ENCODE measurements at regions of chrX and their contacts with region 1.

Region 1: DNA sequence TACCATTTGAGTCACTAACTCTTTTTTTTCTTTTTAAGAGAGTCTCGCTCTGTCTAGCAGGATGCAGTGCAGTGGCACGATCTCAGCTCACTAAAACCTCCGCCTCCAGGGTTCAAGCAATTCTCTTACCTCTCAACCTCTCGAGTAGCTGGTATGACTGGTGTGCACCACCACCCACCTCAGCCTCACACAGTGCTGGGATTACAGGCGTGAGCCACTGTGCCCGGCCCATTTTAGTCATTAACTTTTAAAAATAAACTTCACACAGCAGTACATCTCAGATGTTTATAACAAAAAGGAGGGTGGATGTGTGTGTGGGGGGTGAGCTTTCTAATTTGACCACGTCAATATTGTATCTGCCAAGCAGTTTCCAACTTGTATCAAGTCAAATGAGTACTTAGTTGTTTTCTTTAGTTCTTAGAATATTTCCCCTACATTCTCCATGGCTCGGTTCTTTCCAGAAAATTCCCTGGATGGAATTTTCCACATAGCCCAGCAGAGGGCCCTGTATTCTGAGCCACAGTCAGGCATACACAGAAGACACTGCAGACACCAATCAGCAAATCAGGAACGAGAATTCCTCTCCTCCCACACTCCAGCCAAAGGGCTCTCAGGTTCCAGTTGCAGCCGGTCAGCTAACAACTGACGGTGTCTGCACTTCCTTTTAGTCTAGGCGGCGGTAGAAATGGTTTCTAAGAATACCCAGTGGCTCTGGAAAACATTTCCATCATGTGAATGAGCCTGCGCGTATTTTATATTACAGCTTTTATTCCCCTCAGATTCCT is 20.1 kb upstream of the ARAF start:
- DNase-seq: peak; percentile 80 to 87
- ATAC-seq: peak; percentile 100
- H3K4me3 ChIP-seq: peak overlapping the region in 1 of 4 donors; percentile 11
- H3K27ac ChIP-seq: peak overlapping the region; percentile 78 to 85 (median 82)
- H3K4me1 ChIP-seq: peaks cover 10 to 16% of the 10 kb centered on the region in 2 donors
- H3K27me3 ChIP-seq: no peaks in the 10 kb centered on the region
- CTCF ChIP-seq: peak; percentile 41 to 58 (median 52)
- POLR2A ChIP-seq: peak; percentile 27 to 47

Region 2: GRCh38 chrX:47644557-47645091 is 103.7 kb after region 1 on chrX:
- in situ Hi-C with region 1: loop called in 1 of 4 experiments (anchors 25 kb)
- intact Hi-C with region 1: no loop called
- DNase-seq: no peak
- ATAC-seq: peak in 1 of 2 donors; percentile 44
- H3K4me3 ChIP-seq: no peak overlapping the region
- H3K27ac ChIP-seq: no peak overlapping the region
- H3K4me1 ChIP-seq: peaks cover 5 to 8% of the 10 kb centered on the region in 2 donors
- H3K27me3 ChIP-seq: no peaks in the 10 kb centered on the region
- CTCF ChIP-seq: peak in 1 of 5 experiments; percentile 28
- POLR2A ChIP-seq: no peak

Region 3: GRCh38 chrX:47817421-47817820 is 276.5 kb after region 1 on chrX:
- in situ Hi-C with region 1: no loop called
- intact Hi-C with region 1: no loop called
- DNase-seq: no peak
- ATAC-seq: no peak
- H3K4me3 ChIP-seq: no peak overlapping the region
- H3K27ac ChIP-seq: no peak overlapping the region
- H3K4me1 ChIP-seq: no peaks in the 10 kb centered on the region
- H3K27me3 ChIP-seq: no peaks in the 10 kb centered on the region
- CTCF ChIP-seq: no peak
- POLR2A ChIP-seq: no peak

Measured in gastrocnemius medialis (tissue), 4 donors.